ENCODE measurements at regions of chr17 and their contacts with region 1.

Region 1: DNA sequence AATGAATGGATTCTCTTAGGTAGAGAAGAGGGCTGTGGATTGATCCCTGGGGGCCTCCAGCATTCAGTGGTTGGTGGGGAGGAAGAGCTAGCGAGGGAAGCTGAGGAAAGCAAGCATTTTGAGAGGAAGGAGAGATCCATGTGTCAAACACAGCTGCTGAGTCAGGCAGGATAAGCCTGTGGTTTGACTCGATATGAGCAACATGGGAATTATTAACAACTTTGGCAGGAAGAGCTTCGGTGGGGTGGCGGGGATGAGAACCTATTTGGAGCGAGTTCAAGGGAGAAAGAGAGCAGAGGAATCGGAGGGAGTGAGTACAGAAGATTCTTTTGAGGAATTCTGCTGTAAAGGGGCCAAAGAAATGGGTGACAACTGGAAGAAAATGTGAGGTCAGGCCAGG is 59.5 kb upstream of the CDC42EP4 start:
- DNase-seq: peak; percentile 78
- H3K4me3 ChIP-seq: no peak overlapping the region
- CTCF ChIP-seq: no peak

Region 2: DNA sequence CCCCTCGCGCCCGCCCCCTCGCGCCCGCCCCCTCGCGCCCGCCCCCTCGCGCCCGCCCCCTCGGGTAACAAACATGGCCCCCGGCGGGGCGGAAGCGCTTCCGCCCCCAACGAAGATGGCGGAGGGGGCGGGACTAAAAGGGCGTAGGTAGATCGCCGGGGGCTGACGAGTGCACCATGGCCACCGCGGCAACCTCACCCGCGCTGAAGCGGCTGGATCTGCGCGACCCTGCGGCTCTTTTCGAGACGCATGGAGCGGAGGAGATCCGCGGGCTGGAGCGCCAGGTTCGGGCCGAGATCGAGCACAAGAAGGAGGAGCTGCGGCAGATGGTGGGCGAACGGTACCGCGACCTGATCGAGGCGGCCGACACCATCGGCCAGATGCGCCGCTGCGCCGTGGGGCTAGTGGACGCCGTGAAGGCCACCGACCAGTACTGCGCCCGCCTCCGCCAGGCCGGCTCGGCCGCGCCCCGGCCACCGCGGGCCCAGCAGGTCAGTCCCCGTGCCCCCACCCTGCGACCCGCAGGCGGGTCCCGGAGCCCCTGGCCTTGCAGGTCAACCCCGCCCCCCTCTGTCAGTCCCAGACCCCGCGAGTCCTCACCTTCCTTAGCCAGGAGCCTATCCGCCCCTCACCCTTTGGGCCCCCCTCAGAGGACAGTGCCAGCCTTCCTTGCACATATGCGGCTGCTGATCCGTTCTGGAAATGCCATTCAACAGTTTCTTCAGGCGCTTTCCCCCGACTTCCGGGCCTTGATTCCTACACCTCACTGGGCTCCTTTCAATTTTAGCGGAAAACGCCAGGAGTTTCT is 178.2 kb before region 1 on chr17 and contains the start of gene COG1:
- CTCF ChIA-PET with region 1: interaction called, 13 read pairs
- POLR2A ChIA-PET with region 1: no interaction called
- DNase-seq: no peak
- H3K4me3 ChIP-seq: peak within 1 kb of the TSS; percentile 93
- CTCF ChIP-seq: no peak

Region 3: GRCh38 chr17:73261952-73262675 is 109.2 kb before region 1 on chr17:
- CTCF ChIA-PET with region 1: interaction called, 848 read pairs
- POLR2A ChIA-PET with region 1: no interaction called
- DNase-seq: no peak
- H3K4me3 ChIP-seq: no peak overlapping the region
- CTCF ChIP-seq: no peak

Region 4: GRCh38 chr17:73311781-73312641 is 59.3 kb before region 1 on chr17 and contains the start of gene CDC42EP4:
- CTCF ChIA-PET with region 1: interaction called, 22 read pairs
- POLR2A ChIA-PET with region 1: interaction called, 5 read pairs
- DNase-seq: no peak
- H3K4me3 ChIP-seq: peak within 1 kb of the TSS; percentile 96
- CTCF ChIP-seq: no peak

Region 5: DNA sequence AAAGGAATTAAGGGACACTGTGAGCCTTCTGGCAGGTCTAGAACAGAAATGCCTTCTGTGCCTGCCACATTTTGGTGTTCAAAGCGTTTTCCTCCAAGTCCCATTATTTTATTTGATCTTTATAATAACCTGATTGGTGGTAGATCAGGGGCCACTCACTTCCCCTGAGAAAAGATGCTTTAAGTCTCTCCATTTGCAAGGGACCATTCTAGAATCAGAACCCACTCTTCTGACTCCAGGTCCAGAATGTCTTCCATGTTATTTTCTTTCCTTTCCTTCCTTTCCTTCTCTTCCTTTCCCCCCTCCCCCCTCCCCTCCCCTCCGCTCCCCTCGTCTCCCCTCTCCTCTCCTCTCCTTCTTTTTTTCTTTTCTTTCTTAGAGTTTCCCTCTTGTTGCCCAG is 40.2 kb before region 1 on chr17:
- CTCF ChIA-PET with region 1: no interaction called
- POLR2A ChIA-PET with region 1: no interaction called
- DNase-seq: no peak
- H3K4me3 ChIP-seq: no peak overlapping the region
- CTCF ChIP-seq: no peak

Region 6: DNA sequence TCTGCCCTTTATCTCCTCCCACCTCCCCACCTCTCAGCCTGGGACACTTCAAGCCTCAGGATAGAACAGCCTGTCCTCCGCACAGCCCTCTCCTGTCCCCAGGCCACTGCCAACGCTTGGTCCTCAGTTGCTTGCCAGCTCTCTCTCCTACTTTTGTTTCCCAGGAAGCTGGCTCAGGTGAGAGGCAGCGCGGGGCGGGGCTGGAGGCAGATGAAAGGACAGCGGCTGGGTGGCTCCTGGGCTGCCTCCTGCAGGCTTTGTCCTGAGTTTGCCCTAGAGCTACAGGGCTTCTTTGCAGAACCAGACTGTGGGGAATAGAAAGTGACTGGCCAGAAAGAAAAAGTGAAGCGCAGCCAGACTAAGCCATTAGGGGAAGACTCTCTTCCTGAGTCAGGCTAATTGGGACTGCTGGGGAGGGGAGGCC is 11.3 kb before region 1 on chr17:
- CTCF ChIA-PET with region 1: interaction called, 28 read pairs
- POLR2A ChIA-PET with region 1: no interaction called
- DNase-seq: no peak
- H3K4me3 ChIP-seq: no peak overlapping the region
- CTCF ChIP-seq: no peak

Region 7: GRCh38 chr17:73404246-73404645 is 33.0 kb after region 1 on chr17:
- CTCF ChIA-PET with region 1: no interaction called
- POLR2A ChIA-PET with region 1: no interaction called
- DNase-seq: no peak
- H3K4me3 ChIP-seq: no peak overlapping the region
- CTCF ChIP-seq: no peak